AG04449 (cell line): ENCODE measurements at regions of chr11 and their contacts with region 1.

Region 1: DNA sequence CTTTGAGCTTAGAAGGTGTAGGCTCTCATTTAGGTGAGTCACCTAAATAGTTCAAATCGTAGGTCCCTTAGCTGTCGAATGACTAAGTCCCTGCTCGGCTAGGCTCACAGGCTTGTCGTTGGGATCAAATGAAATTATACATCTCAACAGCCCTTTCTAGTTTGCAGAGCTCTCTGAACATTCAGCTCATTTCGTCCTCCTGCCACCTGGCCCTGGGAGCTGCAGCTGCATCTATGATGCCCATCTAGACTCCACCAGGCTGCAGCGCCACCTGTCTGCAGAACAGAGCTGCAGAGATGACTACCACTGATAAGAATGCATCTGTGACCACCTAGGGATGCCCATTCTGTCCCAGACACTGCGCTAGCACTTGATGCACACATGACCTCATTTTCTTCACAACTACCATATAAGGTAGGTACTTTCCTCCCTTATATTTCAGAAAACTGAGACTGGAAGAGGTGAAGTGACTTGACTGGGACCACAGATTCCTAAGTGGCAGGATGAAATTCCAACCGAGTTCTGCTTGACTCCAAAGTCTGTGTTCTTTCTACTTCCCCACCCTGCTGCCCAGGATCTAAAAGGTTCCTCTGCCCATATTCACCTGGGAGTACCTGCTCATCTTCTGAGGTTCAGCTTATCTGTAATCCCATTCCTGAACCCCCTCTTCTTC is 141.1 kb upstream of the NARS2 start:
- DNase-seq: peak; percentile 23
- H3K4me3 ChIP-seq: no peak overlapping the region
- CTCF ChIP-seq: peak; percentile 74

Region 2: GRCh38 chr11:78622666-78623065 is 93.1 kb before region 1 on chr11:
- CTCF ChIA-PET with region 1: no interaction called
- POLR2A ChIA-PET with region 1: no interaction called
- DNase-seq: no peak
- H3K4me3 ChIP-seq: no peak overlapping the region
- CTCF ChIP-seq: no peak

Region 3: GRCh38 chr11:78698612-78699011 is 17.2 kb before region 1 on chr11:
- CTCF ChIA-PET with region 1: interaction called, 76 read pairs
- POLR2A ChIA-PET with region 1: no interaction called
- DNase-seq: peak; percentile 26
- H3K4me3 ChIP-seq: no peak overlapping the region
- CTCF ChIP-seq: no peak

Region 4: GRCh38 chr11:78731027-78731426 is 15.3 kb after region 1 on chr11:
- CTCF ChIA-PET with region 1: interaction called, 78 read pairs
- POLR2A ChIA-PET with region 1: no interaction called
- DNase-seq: no peak
- H3K4me3 ChIP-seq: no peak overlapping the region
- CTCF ChIP-seq: no peak

Region 5: DNA sequence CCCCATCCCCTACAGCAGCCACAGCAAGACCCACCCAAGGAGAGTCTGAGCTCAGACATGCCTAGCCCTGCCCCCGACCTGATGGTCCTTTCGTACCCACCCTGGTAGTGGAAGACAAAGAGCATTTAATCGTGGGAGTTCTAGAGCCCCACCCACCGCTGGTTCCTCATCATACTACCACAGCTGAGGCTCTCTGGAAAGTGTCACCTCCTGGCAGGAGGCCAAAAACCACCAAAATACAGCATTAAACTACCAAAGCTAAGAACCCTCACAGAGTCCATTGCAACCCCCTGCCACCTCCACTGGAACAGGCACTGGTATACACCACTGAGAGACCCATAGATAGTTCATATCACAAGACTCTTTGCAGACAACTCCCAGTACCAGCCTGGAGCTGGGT is 413.9 kb after region 1 on chr11:
- CTCF ChIA-PET with region 1: no interaction called
- POLR2A ChIA-PET with region 1: no interaction called
- DNase-seq: no peak
- H3K4me3 ChIP-seq: no peak overlapping the region
- CTCF ChIP-seq: no peak